ENCODE measurements at regions of chr11 and their contacts with region 1.

Region 1: GRCh38 chr11:34250732-34251639 is 106.8 kb downstream of the ABTB2 start:
- DNase-seq: peak; percentile 45 to 87 (median 72)
- H3K4me3 ChIP-seq: peak overlapping the region in 1 of 2 donors; percentile 7
- H3K4me3 Mint-ChIP-seq: peak overlapping the region in 7 of 8 donors; percentile 26 to 81 (median 57)
- H3K27ac ChIP-seq: no peak overlapping the region
- H3K27ac Mint-ChIP-seq: peak overlapping the region in 4 of 7 donors; percentile 23 to 87 (median 53)
- H3K4me1 ChIP-seq: peaks cover 49% of the 10 kb centered on the region
- H3K4me1 Mint-ChIP-seq: peaks cover 38 to 61% (median 48%) of the 10 kb centered on the region in 4 donors
- H3K27me3 ChIP-seq: no peaks in the 10 kb centered on the region
- H3K27me3 Mint-ChIP-seq: peaks cover 0 to 3% of the 10 kb centered on the region in 2 donors

Region 2: DNA sequence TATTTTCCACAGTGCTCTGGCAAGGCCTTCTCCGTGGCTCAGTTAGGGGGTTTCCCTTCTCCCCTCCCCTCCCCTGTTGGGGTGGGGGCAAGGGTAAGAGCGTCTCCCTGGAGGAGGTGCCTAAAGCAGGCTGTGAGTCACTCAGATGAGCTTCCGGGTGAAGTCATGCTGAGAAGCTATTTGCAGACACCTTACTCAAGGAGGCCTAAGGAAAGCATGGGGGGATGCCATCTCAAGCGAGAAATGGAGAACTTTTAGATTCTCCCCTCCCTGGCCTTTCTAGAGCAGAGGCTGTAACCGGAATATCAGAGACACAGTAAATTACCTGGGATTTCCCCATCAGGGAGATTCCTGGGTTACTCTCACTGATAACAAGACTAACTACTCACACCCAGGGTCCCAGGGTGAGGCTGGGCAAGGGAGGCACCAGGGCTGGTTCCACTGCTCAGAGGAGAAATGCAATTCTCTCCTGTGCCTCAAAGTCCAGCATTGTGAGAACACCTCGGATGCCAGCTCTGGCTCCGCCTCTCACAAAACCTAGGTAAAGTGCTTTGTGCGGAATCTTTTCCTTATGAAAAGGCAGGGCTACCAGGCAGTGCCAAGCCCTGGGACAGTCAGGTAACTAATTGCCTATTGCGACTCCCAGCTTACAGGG is 16.8 kb before region 1 on chr11:
- CTCF ChIA-PET with region 1: interaction called, 8 read pairs
- POLR2A ChIA-PET with region 1: interaction called, 7 read pairs
- intact Hi-C with region 1: loop called (anchors 1 kb)
- DNase-seq: peak; percentile 56 to 96 (median 68)
- H3K4me3 ChIP-seq: no peak overlapping the region
- H3K4me3 Mint-ChIP-seq: peak overlapping the region in 4 of 8 donors; percentile 22 to 71 (median 36)
- H3K27ac ChIP-seq: no peak overlapping the region
- H3K27ac Mint-ChIP-seq: peak overlapping the region in 6 of 7 donors; percentile 24 to 83 (median 80)
- H3K4me1 ChIP-seq: peaks cover 22% of the 10 kb centered on the region
- H3K4me1 Mint-ChIP-seq: peaks cover 12 to 32% (median 19%) of the 10 kb centered on the region in 4 donors
- H3K27me3 ChIP-seq: no peaks in the 10 kb centered on the region
- H3K27me3 Mint-ChIP-seq: peaks cover 0 to 6% of the 10 kb centered on the region in 2 donors